Activated CD4-positive, alpha-beta memory T cell treated with anti-CD3 and anti-CD28 coated beads for 36 hours (primary cell): ENCODE measurements at regions of chr19 and their contacts with region 1.

Region 1: DNA sequence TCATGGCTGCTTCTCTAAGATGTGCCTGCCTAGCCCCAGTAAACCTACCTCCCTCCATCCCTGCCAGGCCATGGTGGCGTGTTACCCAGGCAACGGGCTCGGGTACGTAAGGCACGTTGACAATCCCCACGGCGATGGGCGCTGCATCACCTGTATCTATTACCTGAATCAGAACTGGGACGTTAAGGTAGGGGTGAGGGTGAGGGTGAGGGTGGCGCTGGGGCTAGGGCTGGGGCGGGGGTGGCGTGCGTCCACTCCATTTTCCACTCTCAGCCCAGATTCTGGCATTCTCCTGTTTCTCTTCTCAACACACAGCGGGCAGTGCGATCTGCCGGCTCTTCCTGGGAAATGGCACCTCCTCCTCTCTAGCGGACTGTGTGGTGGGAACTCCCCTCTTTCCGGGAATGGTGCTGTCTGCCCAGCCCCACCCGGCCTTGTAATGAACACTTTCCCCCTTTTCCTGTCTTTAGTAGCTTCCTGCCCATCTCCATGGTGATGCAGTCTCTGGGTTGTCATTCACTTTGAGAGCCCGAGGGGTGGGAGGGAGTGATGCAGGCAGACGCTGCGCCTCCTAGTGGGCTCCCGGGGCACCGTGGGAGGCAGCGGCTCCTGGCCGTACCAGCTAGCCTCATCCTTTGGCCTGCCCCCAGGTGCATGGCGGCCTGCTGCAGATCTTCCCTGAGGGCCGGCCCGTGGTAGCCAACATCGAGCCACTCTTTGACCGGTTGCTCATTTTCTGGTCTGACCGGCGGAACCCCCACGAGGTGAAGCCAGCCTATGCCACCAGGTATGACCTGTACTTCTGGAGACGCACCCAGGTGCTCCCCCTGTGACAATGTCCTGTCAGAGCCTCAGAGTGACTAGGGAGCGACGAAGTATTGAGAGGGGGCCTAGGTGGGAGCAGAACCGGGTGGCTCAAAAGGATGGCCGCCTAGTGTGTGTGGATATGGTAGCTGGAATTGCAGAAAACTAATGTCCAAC is 7.8 kb downstream of the EGLN2 start:
- DNase-seq: peak; percentile 89
- H3K4me3 Mint-ChIP-seq: peak overlapping the region; percentile 67
- H3K27ac Mint-ChIP-seq: peak overlapping the region; percentile 89
- H3K4me1 Mint-ChIP-seq: peaks cover 81% of the 10 kb centered on the region
- H3K27me3 Mint-ChIP-seq: no peaks in the 10 kb centered on the region

Region 2: DNA sequence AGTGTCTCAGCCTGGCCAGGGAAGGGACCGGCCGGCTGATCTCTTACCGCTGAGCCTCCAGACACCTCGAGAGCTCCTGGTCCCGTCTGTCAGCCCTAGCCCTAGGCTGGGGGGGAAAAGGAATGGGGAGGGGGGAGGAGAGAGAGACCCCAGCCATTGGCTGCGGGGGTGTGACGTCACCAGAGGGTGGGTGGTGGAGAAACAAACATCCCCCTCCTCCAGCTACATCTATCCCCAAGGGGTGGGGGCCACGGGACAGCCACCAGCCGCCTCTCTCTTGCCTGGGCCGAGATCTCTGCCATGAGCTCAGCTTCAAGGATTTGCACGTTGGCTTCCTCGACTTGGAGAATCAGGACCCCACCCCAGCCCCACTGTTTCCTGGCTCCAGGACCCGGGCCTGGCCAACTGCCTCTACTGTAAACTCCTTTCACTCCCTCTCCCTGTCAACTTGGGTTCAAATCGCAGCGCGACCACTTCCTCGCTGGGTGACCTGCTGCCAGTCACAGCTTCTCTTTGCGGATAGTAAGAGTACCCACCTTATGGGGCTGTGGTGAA is 393.4 kb before region 1 on chr19 and contains the start of gene PRX:
- CTCF ChIA-PET with region 1: no interaction called
- POLR2A ChIA-PET with region 1: no interaction called
- intact Hi-C with region 1: no loop called
- DNase-seq: no peak
- H3K4me3 Mint-ChIP-seq: no peak within 1 kb of the TSS
- H3K27ac Mint-ChIP-seq: no peak within 1 kb of the TSS
- H3K4me1 Mint-ChIP-seq: peaks cover 6% of the 10 kb centered on the region
- H3K27me3 Mint-ChIP-seq: peaks cover 3% of the 10 kb centered on the region
- total RNA-seq, gene PRX: 1.2 to 1.7 TPM

Region 3: DNA sequence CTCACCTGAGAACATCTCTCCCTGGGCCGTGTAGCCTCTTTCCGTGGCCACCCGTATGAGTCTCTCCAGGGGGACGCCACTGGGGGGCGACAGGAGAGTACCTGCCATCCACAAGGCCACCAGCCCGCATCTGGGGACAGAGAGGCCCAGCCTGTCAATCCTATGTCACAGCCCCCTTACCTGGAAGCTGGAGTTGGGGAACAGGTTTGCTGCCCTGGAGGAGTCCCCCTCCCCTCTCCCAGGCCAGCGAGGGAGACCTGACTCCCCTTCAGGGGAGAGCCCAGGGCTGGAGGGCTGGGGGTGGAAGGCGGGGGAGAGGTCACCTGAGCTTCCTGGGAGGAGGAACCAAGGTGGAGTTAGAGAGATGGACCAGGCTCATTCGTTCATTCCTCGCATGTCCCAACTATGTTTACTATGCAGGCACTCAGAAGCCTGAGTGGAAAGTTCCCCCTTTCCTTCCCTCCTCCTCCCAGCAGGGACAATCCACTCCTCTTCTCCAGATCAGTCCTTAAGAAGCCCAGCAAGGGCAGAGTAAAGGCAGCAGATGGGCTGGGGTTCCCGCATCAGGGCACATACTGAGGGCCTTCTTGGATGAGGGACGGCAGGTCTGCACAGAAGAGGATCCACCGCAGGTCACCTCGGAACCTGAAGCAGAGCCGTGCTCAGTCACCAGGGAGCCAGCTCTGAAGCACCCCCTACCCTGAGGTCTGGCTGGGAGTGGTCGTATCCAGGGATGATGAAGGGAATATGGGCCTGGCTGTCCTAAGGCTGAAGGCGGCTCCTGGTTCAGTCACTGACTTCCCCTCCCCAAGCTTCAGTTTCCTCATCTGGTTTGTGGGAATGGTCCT is 62.0 kb before region 1 on chr19:
- CTCF ChIA-PET with region 1: interaction called, 27 read pairs
- POLR2A ChIA-PET with region 1: interaction called, 6 read pairs
- intact Hi-C with region 1: no loop called
- DNase-seq: peak; percentile 61
- H3K4me3 Mint-ChIP-seq: no peak overlapping the region
- H3K27ac Mint-ChIP-seq: no peak overlapping the region
- H3K4me1 Mint-ChIP-seq: peaks cover 11% of the 10 kb centered on the region
- H3K27me3 Mint-ChIP-seq: no peaks in the 10 kb centered on the region

Region 4: DNA sequence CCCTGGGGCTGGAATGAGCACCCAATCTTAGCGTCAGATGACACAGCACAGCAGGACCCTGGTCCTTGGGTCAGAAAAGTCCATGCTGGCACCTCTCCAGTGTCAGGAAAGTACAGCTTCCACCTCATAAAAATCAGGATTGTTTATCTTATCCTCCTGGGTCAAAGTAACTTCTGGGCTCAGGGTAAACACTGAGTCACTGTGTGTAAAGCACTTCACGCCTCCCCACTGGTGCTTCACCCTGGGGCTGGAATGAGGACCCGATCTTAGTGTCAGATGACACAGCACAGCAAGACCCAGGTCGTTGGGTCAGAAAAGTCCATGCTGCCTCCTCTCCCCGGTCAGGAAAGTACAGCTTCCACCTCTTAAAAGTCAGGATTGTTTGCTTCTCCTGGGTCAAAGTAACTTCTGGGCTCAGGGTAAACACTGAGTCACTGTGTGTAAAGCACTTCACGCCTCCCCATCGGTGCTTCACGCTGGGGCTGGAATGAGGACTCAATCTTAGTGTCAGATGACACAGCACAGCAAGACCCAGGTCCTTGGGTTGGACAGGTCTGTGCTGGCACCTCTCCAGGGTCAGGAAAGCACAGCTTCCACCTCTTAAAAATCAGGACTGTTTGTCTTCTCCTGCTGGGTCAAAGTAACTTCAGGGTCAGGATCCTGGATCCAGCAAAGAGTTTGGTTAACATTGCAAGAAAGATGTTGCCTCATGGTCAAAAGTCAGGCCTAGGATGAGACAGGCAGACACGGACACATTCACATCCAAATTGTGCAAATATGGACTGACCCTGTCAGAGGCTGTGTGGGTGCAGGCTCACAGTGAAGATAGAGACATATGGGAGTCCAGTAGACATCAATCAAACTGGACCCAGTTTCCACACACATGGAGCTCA is 114.5 kb after region 1 on chr19:
- CTCF ChIA-PET with region 1: no interaction called
- POLR2A ChIA-PET with region 1: no interaction called
- intact Hi-C with region 1: no loop called
- DNase-seq: no peak
- H3K4me3 Mint-ChIP-seq: no peak overlapping the region
- H3K27ac Mint-ChIP-seq: no peak overlapping the region
- H3K4me1 Mint-ChIP-seq: no peaks in the 10 kb centered on the region
- H3K27me3 Mint-ChIP-seq: no peaks in the 10 kb centered on the region

Region 5: DNA sequence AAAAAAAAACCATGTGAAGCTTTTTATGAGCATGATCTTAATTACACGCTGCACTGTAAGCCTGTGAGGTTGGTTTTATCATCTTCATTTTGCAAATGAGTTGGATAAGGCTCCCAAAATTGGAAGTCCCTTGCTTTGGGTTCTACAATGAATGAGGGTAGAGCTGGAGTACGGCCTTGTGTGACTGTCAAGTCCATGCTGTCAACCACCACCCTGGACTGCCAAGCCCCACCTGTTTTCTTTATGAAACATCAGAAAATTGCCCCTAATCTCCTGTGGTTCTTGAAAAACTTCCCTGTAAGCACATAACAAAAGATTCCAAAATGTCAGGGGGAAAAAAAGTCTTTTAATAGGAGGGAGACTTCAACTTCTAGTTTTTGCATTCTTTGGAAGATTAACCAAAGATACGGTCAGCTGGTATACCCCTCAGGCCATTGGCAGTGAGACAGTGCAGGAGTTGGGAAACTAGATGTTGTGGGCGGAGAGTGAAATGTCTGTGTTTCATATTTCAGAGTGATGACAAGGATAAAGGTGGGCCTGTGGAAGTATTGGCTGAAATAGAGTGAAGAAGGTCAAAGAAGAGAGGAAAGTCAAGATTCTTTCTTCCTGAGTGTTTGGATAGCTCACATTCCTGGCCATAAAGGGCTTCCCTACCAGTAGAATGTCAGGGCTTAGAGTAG is 225.0 kb after region 1 on chr19:
- CTCF ChIA-PET with region 1: no interaction called
- POLR2A ChIA-PET with region 1: no interaction called
- intact Hi-C with region 1: no loop called
- DNase-seq: no peak
- H3K4me3 Mint-ChIP-seq: no peak overlapping the region
- H3K27ac Mint-ChIP-seq: no peak overlapping the region
- H3K4me1 Mint-ChIP-seq: peaks cover 5% of the 10 kb centered on the region
- H3K27me3 Mint-ChIP-seq: peaks cover 8% of the 10 kb centered on the region

Region 6: DNA sequence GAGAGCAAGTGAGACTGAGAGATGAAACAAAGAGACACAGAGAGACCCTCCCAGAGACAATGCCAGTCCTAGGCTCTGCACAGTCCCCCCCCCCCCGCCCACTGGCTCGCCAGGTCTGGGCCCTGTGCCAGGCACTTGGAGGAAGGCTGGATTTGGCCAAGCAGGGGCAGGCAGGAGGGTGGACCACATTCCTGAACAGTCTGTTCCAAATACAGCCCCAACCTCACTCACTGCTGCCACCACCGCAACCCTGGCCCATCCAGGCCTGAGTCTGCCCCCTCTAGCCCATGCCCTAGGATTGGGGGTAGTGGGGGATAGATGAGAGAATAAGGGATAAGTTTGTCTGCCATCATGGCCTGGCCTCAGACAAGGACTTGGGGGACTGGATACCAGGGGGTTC is 326.5 kb after region 1 on chr19:
- CTCF ChIA-PET with region 1: no interaction called
- POLR2A ChIA-PET with region 1: interaction called, 3 read pairs
- intact Hi-C with region 1: loop called (anchors 5 kb)
- DNase-seq: no peak
- H3K4me3 Mint-ChIP-seq: no peak overlapping the region
- H3K27ac Mint-ChIP-seq: no peak overlapping the region
- H3K4me1 Mint-ChIP-seq: peaks cover 6% of the 10 kb centered on the region
- H3K27me3 Mint-ChIP-seq: no peaks in the 10 kb centered on the region